ENCODE measurements at regions of chr1 and their contacts with region 1.

Region 1: GRCh38 chr1:203486618-203487370 is 7.2 kb upstream of the OPTC start:
- DNase-seq: no peak
- H3K4me3 Mint-ChIP-seq: peak overlapping the region; percentile 66
- H3K27ac Mint-ChIP-seq: peak overlapping the region; percentile 26
- H3K4me1 Mint-ChIP-seq: peaks cover 6% of the 10 kb centered on the region
- H3K27me3 Mint-ChIP-seq: peaks cover 7% of the 10 kb centered on the region
- CTCF ChIP-seq: no peak

Region 2: DNA sequence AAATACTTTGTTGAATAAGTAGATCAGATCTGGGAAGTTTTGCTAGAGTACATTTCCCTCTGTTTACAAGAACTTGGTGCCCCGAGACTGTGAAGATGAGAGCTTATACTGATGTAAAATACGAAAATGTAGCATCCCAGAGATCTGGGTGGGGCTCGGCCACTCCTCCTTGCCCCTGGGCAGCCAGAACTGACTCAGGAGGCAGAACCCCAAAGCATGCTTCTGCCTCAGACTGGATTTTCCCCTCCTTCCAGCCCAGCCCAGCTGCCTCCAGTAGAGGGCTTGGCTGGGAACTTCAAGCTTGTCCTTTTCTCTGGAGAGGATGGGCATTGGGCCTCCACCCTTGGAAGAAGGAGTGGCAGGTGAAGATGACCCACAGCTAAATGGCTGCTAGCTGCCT is 205.8 kb before region 1 on chr1:
- CTCF ChIA-PET with region 1: interaction called, 14 read pairs
- POLR2A ChIA-PET with region 1: no interaction called
- intact Hi-C with region 1: no loop called
- DNase-seq: peak; percentile 79
- H3K4me3 Mint-ChIP-seq: no peak overlapping the region
- H3K27ac Mint-ChIP-seq: no peak overlapping the region
- H3K4me1 Mint-ChIP-seq: peaks cover 21% of the 10 kb centered on the region
- H3K27me3 Mint-ChIP-seq: no peaks in the 10 kb centered on the region
- CTCF ChIP-seq: peak; percentile 39

Region 3: DNA sequence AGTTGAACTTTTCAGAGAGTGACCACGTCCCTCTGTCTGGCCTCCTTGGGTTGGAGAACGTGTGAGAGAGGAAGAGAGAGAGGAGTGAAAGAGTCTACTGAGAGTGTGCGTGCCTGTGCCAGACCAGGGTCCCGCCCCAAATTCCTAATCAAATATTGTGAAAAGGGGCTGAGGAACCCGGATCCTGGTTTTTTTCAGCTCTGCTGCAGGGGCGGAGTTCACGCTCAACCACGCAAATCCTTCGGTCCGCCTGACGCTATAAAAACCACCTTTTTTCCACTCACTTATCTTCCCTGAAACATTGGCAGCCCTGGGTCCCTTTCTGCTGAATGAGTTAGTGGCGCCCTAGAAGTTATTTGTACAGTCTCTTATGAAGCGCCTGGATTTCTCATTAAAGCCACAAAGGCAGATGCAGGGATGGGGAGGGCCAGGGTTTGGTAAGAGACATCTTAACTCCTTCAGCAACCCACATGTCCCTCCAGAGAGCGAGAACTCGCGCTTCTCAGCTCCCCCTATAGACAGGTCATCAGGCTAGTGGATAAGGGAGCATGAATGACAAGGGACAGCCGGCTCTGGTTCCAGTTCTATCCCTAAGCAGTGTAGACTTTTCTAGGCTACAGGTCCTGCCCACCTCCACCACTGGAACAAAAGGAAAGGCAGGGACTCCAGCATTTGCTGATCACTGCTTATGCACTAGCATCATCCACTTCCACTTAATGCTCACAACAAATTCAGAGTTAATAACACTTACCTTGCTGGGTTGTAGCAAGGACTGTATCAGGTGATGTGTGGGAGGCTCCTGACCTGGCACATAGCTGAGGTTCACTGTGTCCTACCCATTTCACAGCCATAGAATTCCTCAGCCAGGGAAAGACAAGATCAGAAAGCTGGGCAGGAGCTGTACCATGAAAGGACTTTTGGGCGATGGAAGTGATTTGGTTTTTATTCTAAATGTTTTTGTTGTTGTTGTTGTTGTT is 135.5 kb before region 1 on chr1 and contains the start of gene FMOD:
- CTCF ChIA-PET with region 1: interaction called, 981 read pairs
- POLR2A ChIA-PET with region 1: no interaction called
- intact Hi-C with region 1: no loop called
- DNase-seq: peak; percentile 23
- H3K4me3 Mint-ChIP-seq: no peak within 1 kb of the TSS
- H3K27ac Mint-ChIP-seq: no peak within 1 kb of the TSS
- H3K4me1 Mint-ChIP-seq: no peaks in the 10 kb centered on the region
- H3K27me3 Mint-ChIP-seq: peaks cover 93% of the 10 kb centered on the region
- CTCF ChIP-seq: peak; percentile 19
- total RNA-seq, gene FMOD: not detected in 2 replicates

Region 4: GRCh38 chr1:203373991-203374390 is 112.8 kb before region 1 on chr1:
- CTCF ChIA-PET with region 1: interaction called, 86 read pairs
- POLR2A ChIA-PET with region 1: interaction called, 5 read pairs
- intact Hi-C with region 1: loop called (anchors 1 kb)
- DNase-seq: no peak
- H3K4me3 Mint-ChIP-seq: no peak overlapping the region
- H3K27ac Mint-ChIP-seq: no peak overlapping the region
- H3K4me1 Mint-ChIP-seq: peaks cover 8% of the 10 kb centered on the region
- H3K27me3 Mint-ChIP-seq: peaks cover 31% of the 10 kb centered on the region
- CTCF ChIP-seq: no peak

Region 5: DNA sequence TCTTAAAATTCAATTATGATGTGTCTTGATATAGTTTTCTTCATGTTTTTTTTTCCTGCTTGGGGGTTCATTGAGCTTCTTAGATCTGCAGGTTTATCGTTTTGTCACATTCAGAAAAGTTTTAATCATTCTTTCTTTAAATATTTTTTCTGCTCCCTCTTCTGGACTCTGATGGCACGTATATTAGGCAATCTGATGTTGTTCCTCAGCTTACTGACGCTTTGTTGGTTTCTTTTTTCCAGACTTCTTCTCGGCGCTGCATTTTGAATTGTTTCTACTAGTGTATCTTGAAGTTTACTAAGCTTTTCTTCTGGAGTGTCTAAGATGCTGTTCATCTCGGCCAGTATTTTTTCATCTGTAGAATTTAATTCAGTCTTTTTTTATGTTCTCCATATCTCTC is 91.0 kb before region 1 on chr1:
- CTCF ChIA-PET with region 1: no interaction called
- POLR2A ChIA-PET with region 1: no interaction called
- intact Hi-C with region 1: no loop called
- DNase-seq: no peak
- H3K4me3 Mint-ChIP-seq: no peak overlapping the region
- H3K27ac Mint-ChIP-seq: no peak overlapping the region
- H3K4me1 Mint-ChIP-seq: no peaks in the 10 kb centered on the region
- H3K27me3 Mint-ChIP-seq: peaks cover 57% of the 10 kb centered on the region
- CTCF ChIP-seq: no peak

Region 6: GRCh38 chr1:203463469-203464062 is 23.2 kb before region 1 on chr1:
- CTCF ChIA-PET with region 1: interaction called, 30 read pairs
- POLR2A ChIA-PET with region 1: interaction called, 5 read pairs
- intact Hi-C with region 1: loop called (anchors 2 kb)
- DNase-seq: no peak
- H3K4me3 Mint-ChIP-seq: no peak overlapping the region
- H3K27ac Mint-ChIP-seq: no peak overlapping the region
- H3K4me1 Mint-ChIP-seq: peaks cover 28% of the 10 kb centered on the region
- H3K27me3 Mint-ChIP-seq: peaks cover 35% of the 10 kb centered on the region
- CTCF ChIP-seq: no peak

Region 7: DNA sequence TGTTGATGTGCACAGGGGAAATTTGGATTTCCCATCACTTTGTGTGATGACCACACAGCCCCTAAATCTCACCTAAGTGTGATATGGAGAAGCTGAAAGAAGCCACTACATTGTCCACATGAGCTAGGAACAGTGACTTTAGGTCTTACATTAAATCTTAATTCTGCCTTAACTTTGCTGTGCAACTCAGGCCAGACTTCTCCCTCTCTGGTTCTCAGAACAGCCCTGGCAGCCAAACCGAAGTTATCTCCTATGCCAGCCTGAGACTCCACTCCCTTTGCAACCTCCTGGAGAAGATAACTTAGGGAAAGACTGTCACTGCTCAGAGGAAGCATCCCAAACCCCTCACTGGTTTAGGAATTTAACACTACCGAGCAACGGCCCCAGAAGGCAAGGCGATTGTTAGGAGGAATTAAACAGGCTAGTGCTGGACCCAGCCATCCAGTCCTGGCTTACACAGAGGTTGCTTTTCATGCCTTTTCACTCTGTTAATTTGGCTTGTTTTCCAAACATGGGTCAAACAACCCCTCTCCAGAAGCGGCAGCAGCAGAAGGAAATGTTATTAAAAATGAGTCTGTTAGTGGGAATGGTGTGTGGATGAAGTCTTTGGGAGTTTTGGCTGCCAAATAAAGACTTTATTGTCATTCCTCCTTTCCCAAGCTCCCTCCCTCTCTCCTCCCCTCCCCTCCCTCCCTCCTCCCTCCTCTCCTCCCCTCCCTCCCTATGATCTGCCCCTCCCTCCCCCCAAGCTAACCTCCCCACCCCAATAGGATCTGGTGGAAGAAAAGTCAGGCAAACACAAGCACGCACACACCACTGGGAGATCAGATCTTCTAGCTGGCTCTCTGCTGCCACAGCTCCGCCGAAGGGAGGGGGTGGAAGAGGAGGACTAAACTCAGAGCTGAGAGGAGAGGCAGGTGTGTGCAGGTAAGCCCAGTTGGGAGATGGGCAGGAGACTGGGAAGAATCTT is 11.5 kb before region 1 on chr1 and contains the start of gene PRELP:
- CTCF ChIA-PET with region 1: interaction called, 93 read pairs
- POLR2A ChIA-PET with region 1: no interaction called
- intact Hi-C with region 1: no loop called
- DNase-seq: peak; percentile 25
- H3K4me3 Mint-ChIP-seq: no peak within 1 kb of the TSS
- H3K27ac Mint-ChIP-seq: no peak within 1 kb of the TSS
- H3K4me1 Mint-ChIP-seq: peaks cover 9% of the 10 kb centered on the region
- H3K27me3 Mint-ChIP-seq: peaks cover 55% of the 10 kb centered on the region
- CTCF ChIP-seq: no peak
- total RNA-seq, gene PRELP: not detected in 2 replicates